Natural killer cell (primary cell): ENCODE measurements at regions of chr6 and their contacts with region 1.

Region 1: GRCh38 chr6:84696166-84696565 is 68.2 kb downstream of the TBX18 start:
- DNase-seq: no peak
- ATAC-seq: no peak
- H3K4me3 ChIP-seq: no peak overlapping the region
- H3K4me3 Mint-ChIP-seq: no peak overlapping the region
- H3K27ac ChIP-seq: no peak overlapping the region
- H3K27ac Mint-ChIP-seq: no peak overlapping the region
- H3K4me1 ChIP-seq: no peaks in the 10 kb centered on the region
- H3K4me1 Mint-ChIP-seq: no peaks in the 10 kb centered on the region
- H3K27me3 ChIP-seq: no peaks in the 10 kb centered on the region
- H3K27me3 Mint-ChIP-seq: no peaks in the 10 kb centered on the region
- CTCF ChIP-seq: no peak

Region 2: GRCh38 chr6:84635081-84635761 is 60.9 kb before region 1 on chr6:
- intact Hi-C with region 1: no loop called
- DNase-seq: no peak
- ATAC-seq: no peak
- H3K4me3 ChIP-seq: no peak overlapping the region
- H3K4me3 Mint-ChIP-seq: no peak overlapping the region
- H3K27ac ChIP-seq: no peak overlapping the region
- H3K27ac Mint-ChIP-seq: no peak overlapping the region
- H3K4me1 ChIP-seq: no peaks in the 10 kb centered on the region
- H3K4me1 Mint-ChIP-seq: no peaks in the 10 kb centered on the region
- H3K27me3 ChIP-seq: no peaks in the 10 kb centered on the region
- H3K27me3 Mint-ChIP-seq: no peaks in the 10 kb centered on the region
- CTCF ChIP-seq: no peak

Region 3: GRCh38 chr6:84685983-84686584 is 10.1 kb before region 1 on chr6:
- intact Hi-C with region 1: loop called (anchors 1 kb)
- DNase-seq: peak in 1 of 2 donors; percentile 2
- ATAC-seq: no peak
- H3K4me3 ChIP-seq: no peak overlapping the region
- H3K4me3 Mint-ChIP-seq: no peak overlapping the region
- H3K27ac ChIP-seq: no peak overlapping the region
- H3K27ac Mint-ChIP-seq: no peak overlapping the region
- H3K4me1 ChIP-seq: no peaks in the 10 kb centered on the region
- H3K4me1 Mint-ChIP-seq: no peaks in the 10 kb centered on the region
- H3K27me3 ChIP-seq: no peaks in the 10 kb centered on the region
- H3K27me3 Mint-ChIP-seq: no peaks in the 10 kb centered on the region
- CTCF ChIP-seq: no peak

Region 4: GRCh38 chr6:85593438-85594196 is 897.5 kb after region 1 on chr6 and contains the start of gene SNX14:
- intact Hi-C with region 1: no loop called
- DNase-seq: peak; percentile 75 to 86
- ATAC-seq: peak; percentile 73 to 92 (median 79)
- H3K4me3 ChIP-seq: peak within 1 kb of the TSS; percentile 94
- H3K4me3 Mint-ChIP-seq: peak within 1 kb of the TSS; percentile 96
- H3K27ac ChIP-seq: peak within 1 kb of the TSS; percentile 91
- H3K27ac Mint-ChIP-seq: peak within 1 kb of the TSS; percentile 92 to 98
- H3K4me1 ChIP-seq: peaks cover 11% of the 10 kb centered on the region
- H3K4me1 Mint-ChIP-seq: peaks cover 52 to 56% of the 10 kb centered on the region in 2 donors
- H3K27me3 ChIP-seq: no peaks in the 10 kb centered on the region
- H3K27me3 Mint-ChIP-seq: no peaks in the 10 kb centered on the region
- CTCF ChIP-seq: no peak
- total RNA-seq, gene SNX14: 73.0 to 109 (median 80.3) TPM